ENCODE measurements at regions of chr6 and their contacts with region 1.

Region 1: DNA sequence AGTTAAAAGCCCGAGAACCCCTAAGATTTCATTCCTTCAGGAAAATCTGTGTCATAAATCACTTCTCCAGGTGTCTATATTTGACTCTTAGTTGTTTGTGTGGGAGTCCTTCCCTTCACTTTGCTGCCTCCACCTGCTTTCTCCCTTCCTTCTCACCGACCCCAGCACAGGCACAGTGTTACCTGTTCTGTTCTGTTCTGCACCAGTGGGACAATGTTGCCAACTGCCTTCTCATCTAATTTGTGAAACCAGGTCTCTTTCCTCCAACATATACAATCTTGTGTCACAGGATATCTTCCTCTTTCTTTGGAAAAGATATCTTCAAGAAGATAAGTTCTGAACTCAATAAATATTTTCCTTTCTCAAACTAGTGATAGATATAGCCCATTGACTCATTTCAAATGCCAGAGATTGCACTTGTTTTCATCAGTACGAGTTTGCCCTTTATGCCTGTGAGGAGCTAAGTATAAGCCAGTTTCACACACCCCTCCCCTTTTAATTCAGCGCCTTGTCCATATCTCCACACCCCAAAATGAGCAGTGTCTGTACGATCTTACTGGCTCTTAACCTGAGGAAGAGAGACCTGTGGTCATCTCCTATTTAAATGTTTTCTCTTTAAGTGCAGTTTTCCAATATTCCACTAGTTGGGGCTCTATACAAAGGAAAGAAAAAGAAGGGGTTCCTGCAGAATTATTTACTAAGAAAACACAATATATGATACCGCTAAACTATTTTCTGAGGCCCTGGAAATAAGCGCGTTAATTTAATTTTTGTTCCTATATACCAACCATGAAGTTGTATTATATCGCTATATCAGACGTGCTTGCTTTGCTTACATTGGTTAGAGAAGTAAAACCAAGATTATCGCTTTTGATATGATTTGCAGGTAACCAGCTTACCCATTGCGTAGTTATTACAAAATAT is 81.6 kb upstream of the PREP start:
- DNase-seq: peak; percentile 55
- ATAC-seq: peak; percentile 74
- H3K4me3 ChIP-seq: no peak overlapping the region
- H3K27ac ChIP-seq: peak overlapping the region; percentile 84
- H3K4me1 ChIP-seq: peaks cover 35% of the 10 kb centered on the region
- H3K27me3 ChIP-seq: no peaks in the 10 kb centered on the region
- CTCF ChIP-seq: peak; percentile 97

Region 2: DNA sequence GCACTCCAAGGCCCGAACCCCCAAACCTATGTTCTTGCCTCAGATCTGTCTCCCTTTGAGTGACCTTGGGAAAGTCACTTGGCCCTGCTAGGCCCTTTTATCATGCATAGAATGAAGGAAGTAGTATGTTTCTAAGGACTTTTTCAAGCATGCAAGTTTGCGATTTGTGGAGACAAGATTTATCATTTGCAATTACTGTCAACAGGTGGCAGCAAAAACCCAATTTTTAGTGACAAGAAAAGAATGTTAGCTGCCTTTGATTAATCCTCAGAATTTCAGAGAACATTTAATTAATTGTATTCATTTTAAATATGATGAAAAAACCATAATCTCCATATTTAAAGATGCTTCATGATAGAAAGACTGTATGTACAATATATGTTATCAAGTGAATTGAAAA is 53.3 kb before region 1 on chr6:
- CTCF ChIA-PET with region 1: interaction called, 9 read pairs
- POLR2A ChIA-PET with region 1: no interaction called
- in situ Hi-C with region 1: no loop called
- intact Hi-C with region 1: loop called (anchors 5 kb)
- DNase-seq: no peak
- ATAC-seq: no peak
- H3K4me3 ChIP-seq: no peak overlapping the region
- H3K27ac ChIP-seq: peak overlapping the region; percentile 60
- H3K4me1 ChIP-seq: peaks cover 15% of the 10 kb centered on the region
- H3K27me3 ChIP-seq: no peaks in the 10 kb centered on the region
- CTCF ChIP-seq: peak; percentile 77

Region 3: DNA sequence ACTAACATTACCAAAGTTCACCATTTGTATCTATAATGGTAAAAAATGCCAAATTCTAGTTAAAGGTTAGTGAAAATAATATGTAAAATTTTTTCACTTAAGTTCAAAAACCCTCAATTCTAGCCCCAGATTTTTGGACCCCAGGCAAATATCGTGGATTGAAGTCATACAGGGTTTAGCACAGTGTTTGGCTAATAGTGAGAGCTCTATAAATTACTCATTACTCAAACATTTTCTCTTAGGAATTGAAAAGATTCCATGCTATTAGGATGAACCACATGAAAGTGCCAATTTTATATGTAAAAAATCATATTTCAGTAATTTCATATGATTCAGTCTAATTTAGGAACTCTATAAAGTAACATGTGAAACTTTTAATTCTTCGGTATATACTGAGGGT is 88.6 kb after region 1 on chr6:
- CTCF ChIA-PET with region 1: no interaction called
- POLR2A ChIA-PET with region 1: no interaction called
- in situ Hi-C with region 1: no loop called
- intact Hi-C with region 1: no loop called
- DNase-seq: no peak
- ATAC-seq: no peak
- H3K4me3 ChIP-seq: no peak overlapping the region
- H3K27ac ChIP-seq: no peak overlapping the region; the same call in 1 of the 2 replicates
- H3K4me1 ChIP-seq: no peaks in the 10 kb centered on the region
- H3K27me3 ChIP-seq: no peaks in the 10 kb centered on the region
- CTCF ChIP-seq: no peak

Region 4: GRCh38 chr6:105992315-105992961 is 507.9 kb after region 1 on chr6:
- CTCF ChIA-PET with region 1: no interaction called
- POLR2A ChIA-PET with region 1: no interaction called
- in situ Hi-C with region 1: no loop called
- intact Hi-C with region 1: loop called (anchors 5 kb)
- DNase-seq: peak; percentile 36
- ATAC-seq: peak; percentile 97
- H3K4me3 ChIP-seq: peak overlapping the region; percentile 87 to 91
- H3K27ac ChIP-seq: peak overlapping the region; percentile 83
- H3K4me1 ChIP-seq: peaks cover 9% of the 10 kb centered on the region; the same call in 1 of the 2 replicates
- H3K27me3 ChIP-seq: no peaks in the 10 kb centered on the region; the same call in 1 of the 2 replicates
- CTCF ChIP-seq: no peak

Region 5: DNA sequence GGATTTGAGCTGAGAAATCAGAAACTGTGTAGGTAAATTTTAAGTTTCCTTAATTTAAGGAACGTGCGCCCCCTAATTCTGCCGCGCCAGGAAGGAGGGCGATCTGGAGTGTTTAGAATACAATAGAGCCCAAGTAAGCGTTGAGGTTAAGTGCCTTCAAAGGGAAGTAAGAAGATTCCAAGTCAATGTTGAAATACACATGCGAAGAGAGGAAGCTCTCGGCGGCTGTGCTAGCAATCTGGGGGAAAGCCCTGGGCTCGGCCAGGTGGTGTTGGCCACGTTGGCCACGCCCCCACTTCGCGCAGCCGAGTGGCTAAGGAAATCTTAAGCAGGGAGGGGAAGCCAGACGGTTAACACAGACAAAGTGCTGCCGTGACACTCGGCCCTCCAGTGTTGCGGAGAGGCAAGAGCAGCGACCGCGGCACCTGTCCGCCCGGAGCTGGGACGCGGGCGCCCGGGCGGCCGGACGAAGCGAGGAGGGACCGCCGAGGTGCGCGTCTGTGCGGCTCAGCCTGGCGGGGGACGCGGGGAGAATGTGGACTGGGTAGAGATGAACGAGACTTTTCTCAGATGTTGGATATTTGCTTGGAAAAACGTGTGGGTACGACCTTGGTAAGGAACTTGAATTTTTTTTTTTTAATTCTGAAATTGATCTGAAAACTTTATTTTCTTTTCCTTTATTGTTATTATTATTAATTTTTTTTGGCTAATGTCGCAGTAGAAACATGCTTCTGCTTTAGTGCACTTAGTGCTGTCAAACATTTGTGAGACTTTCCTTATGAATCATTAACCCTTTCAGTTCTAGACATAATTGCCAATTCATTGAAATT is 601.7 kb after region 1 on chr6 and contains the start of gene PRDM1:
- CTCF ChIA-PET with region 1: no interaction called
- POLR2A ChIA-PET with region 1: no interaction called
- in situ Hi-C with region 1: no loop called
- intact Hi-C with region 1: loop called (anchors 10 kb)
- DNase-seq: no peak
- ATAC-seq: peak; percentile 95
- H3K4me3 ChIP-seq: peak within 1 kb of the TSS; percentile 63 to 68
- H3K27ac ChIP-seq: peak within 1 kb of the TSS; percentile 67
- H3K4me1 ChIP-seq: peaks cover 24% of the 10 kb centered on the region
- H3K27me3 ChIP-seq: peaks cover 2% of the 10 kb centered on the region; the same call in 1 of the 2 replicates
- CTCF ChIP-seq: peak; percentile 58
- total RNA-seq, gene PRDM1: 2.6 TPM

Region 6: DNA sequence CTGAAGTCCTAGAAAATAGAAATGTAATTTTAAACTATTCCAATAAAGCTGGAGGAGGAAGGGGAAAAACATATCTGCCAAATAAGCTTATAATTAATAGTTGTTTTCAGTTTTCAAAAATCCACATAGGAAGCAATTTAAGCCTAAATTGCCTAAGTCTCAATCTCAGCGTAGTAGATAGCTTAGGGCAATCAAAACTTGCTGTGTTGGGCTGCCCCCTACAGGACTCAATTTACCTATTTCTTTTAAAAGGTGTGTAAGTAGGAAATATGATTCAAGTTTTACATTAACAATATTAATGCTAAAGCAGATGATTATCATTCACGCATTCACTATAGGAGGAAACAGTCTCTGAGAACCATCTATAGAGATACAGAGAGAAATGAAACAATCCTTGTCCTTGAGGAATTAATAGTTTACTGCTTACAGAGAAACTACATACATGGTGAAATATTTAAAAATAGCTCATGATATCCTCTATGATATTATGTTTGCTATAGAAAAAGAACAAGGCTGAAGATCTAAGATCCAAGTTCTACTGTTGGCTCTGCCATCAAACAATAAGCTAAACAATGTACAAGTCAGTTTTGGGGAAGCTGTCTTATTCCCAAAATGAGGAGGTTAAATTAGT is 738.9 kb after region 1 on chr6:
- CTCF ChIA-PET with region 1: interaction called, 3 read pairs
- POLR2A ChIA-PET with region 1: no interaction called
- in situ Hi-C with region 1: no loop called
- intact Hi-C with region 1: loop called (anchors 5 kb)
- DNase-seq: peak; percentile 32
- ATAC-seq: peak; percentile 80
- H3K4me3 ChIP-seq: no peak overlapping the region
- H3K27ac ChIP-seq: no peak overlapping the region
- H3K4me1 ChIP-seq: peaks cover 8% of the 10 kb centered on the region; the same call in 1 of the 2 replicates
- H3K27me3 ChIP-seq: no peaks in the 10 kb centered on the region
- CTCF ChIP-seq: peak; percentile 75; the same call in 1 of the 2 replicates

Region 7: DNA sequence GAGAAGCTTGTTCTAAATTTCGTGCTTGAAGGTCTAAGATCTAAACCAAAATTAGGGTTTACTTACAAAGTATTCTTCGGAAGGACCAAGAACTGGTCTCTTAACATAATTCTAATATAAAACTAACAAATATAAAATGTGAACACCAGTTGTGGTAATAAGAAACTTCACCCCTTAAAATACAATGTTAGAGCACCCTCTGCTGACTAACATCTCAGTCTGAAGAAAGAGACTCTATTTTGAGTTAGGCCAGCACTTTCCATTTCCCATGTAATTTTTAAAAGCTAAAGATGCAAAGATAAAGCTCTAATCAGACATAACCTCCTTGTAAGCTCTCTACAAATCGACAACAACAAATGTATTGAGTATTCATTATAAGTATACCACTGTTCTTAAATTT is 816.4 kb after region 1 on chr6:
- CTCF ChIA-PET with region 1: no interaction called
- POLR2A ChIA-PET with region 1: no interaction called
- in situ Hi-C with region 1: no loop called
- intact Hi-C with region 1: loop called (anchors 2 kb)
- DNase-seq: peak; percentile 10
- ATAC-seq: 0 out of 2 replicates have a peak, but pooled peaks have one; percentile 72
- H3K4me3 ChIP-seq: no peak overlapping the region
- H3K27ac ChIP-seq: no peak overlapping the region
- H3K4me1 ChIP-seq: peaks cover 5% of the 10 kb centered on the region; the same call in 1 of the 2 replicates
- H3K27me3 ChIP-seq: no peaks in the 10 kb centered on the region
- CTCF ChIP-seq: peak; percentile 67; the same call in 1 of the 2 replicates